Esophagus muscularis mucosa (tissue), 4 donors: ENCODE measurements at regions of chr6 and their contacts with region 1.

Region 1: GRCh38 chr6:152669895-152670294 is 27.8 kb upstream of the MYCT1 start:
- DNase-seq: no peak
- H3K4me3 ChIP-seq: no peak overlapping the region
- H3K27ac ChIP-seq: no peak overlapping the region
- H3K4me1 ChIP-seq: no peaks in the 10 kb centered on the region
- H3K27me3 ChIP-seq: no peaks in the 10 kb centered on the region
- CTCF ChIP-seq: peak; percentile 46 to 49 (median 48)
- EP300 ChIP-seq: no peak
- POLR2A ChIP-seq: no peak

Region 2: GRCh38 chr6:152642989-152643388 is 26.9 kb before region 1 on chr6:
- intact Hi-C with region 1: loop called (anchors 2 kb)
- DNase-seq: no peak
- H3K4me3 ChIP-seq: no peak overlapping the region
- H3K27ac ChIP-seq: no peak overlapping the region
- H3K4me1 ChIP-seq: peaks cover 0 to 25% (median 18%) of the 10 kb centered on the region in 4 donors
- H3K27me3 ChIP-seq: no peaks in the 10 kb centered on the region
- CTCF ChIP-seq: peak; percentile 48 to 60 (median 48)
- EP300 ChIP-seq: no peak
- POLR2A ChIP-seq: no peak

Region 3: GRCh38 chr6:152720974-152721373 is 51.1 kb after region 1 on chr6:
- intact Hi-C with region 1: no loop called
- DNase-seq: no peak
- H3K4me3 ChIP-seq: no peak overlapping the region
- H3K27ac ChIP-seq: no peak overlapping the region
- H3K4me1 ChIP-seq: no peaks in the 10 kb centered on the region
- H3K27me3 ChIP-seq: no peaks in the 10 kb centered on the region
- CTCF ChIP-seq: no peak
- EP300 ChIP-seq: no peak
- POLR2A ChIP-seq: no peak